ENCODE measurements at regions of chr17 and their contacts with region 1.

Region 1: DNA sequence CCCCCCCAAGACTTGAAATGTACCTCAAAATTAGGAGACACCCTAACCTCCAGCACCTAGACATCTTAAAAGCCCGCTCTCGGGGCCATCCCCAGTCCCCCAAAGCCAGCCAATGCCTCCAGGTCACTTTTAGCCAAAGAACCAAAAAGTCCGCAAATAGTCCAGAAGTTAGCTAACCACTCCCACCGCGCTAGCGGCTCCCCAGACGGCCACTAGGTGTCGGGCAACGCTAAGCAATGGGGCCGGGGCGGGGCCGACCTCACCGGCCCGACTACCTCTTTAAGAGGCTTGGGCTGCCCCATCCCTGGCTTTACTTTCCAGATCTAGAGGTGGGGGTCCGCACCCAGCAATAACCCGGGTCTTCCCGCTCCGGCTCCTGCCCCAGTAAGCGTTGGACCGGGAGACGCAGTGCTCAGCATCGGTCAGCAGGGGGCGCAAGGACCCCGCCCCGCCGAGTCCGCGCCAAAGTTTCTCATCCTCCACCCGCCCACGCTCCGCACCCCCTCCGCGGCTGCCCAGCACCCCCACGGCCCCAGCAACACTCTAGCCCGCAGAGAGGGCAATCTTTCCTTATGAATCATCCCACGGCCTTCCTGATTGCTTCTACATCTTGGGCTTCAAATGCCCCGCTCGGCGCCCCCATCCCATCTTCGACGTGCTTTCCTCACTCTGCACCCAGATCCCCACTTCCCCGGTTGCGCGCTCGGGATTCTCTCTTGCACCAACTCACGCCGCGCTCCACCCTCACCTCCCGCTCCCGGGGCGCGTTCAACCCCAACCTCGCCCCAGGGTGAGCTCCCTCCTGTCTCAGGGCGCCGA is 765 bp downstream of the COL1A1 start:
- DNase-seq: peak; percentile 93
- ATAC-seq: peak; percentile 74
- H3K4me3 ChIP-seq: peak overlapping the region; percentile 69
- H3K27ac ChIP-seq: peak overlapping the region; percentile 92
- H3K4me1 ChIP-seq: peaks cover 18% of the 10 kb centered on the region
- H3K27me3 ChIP-seq: 0 out of 2 replicates have a peak, but pooled peaks cover 6% of the 10 kb centered on the region
- CTCF ChIP-seq: peak; percentile 100

Region 2: GRCh38 chr17:50094753-50095619 is 105.7 kb before region 1 on chr17 and contains the start of gene PDK2:
- CTCF ChIA-PET with region 1: interaction called, 5 read pairs
- POLR2A ChIA-PET with region 1: no interaction called
- intact Hi-C with region 1: loop called (anchors 1 kb)
- DNase-seq: peak; percentile 99
- ATAC-seq: peak; percentile 82
- H3K4me3 ChIP-seq: peak within 1 kb of the TSS; percentile 88
- H3K27ac ChIP-seq: peak within 1 kb of the TSS; percentile 20
- H3K4me1 ChIP-seq: peaks cover 14% of the 10 kb centered on the region
- H3K27me3 ChIP-seq: no peaks in the 10 kb centered on the region
- CTCF ChIP-seq: no peak
- total RNA-seq, gene PDK2: 31.9 and 37.6 TPM in 2 replicates

Region 3: DNA sequence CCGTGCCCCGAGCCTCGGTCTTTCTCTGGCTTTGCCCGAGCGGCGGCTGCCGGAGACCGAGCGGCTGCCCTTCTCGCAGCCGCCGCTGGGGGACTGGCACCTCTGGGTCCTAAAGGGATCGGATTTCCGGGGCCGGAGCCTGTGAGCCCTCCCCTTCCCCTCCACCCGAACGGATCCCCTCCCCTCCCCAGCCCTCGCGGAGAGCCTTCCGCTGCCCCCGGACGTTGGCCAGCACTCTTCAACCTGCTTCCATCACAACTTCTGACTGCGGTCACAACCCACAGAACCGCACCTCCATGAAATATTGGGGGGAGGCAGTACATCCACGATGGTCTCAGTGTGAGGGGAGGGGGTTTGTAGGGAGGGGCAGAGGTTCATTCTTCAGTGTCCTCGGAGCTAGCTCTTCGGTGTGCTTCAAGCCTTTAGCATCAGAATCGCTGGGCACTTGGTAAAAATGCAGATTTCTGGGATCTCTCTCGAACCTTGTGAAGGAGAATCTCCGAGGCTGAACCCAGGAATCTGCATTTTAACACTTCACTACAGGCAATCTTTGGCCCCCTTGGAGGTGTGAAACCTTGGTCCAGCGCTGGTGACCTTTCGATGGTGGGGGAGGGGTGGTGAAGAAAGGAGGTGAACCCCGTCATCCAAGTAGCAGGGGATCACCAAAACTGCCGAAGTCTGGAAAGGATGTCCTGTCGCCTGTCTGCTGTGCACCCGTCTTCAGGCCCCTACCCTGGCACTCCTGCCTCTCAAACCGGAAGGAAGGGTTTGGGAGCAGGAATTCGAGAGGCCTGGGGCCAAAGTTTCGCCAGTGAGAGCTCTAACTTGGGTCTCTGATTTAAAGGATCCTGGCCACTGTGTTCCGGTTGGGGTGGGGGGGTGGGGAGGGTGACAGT is 49.4 kb before region 1 on chr17:
- CTCF ChIA-PET with region 1: interaction called, 13 read pairs
- POLR2A ChIA-PET with region 1: interaction called, 4 read pairs
- intact Hi-C with region 1: no loop called
- DNase-seq: peak; percentile 97
- ATAC-seq: peak; percentile 57
- H3K4me3 ChIP-seq: peak overlapping the region; percentile 90
- H3K27ac ChIP-seq: peak overlapping the region; percentile 82
- H3K4me1 ChIP-seq: peaks cover 51% of the 10 kb centered on the region
- H3K27me3 ChIP-seq: no peaks in the 10 kb centered on the region
- CTCF ChIP-seq: peak; percentile 28; the same call in 1 of the 2 replicates

Region 4: GRCh38 chr17:50218771-50219315 is 18.2 kb after region 1 on chr17:
- CTCF ChIA-PET with region 1: interaction called, 6 read pairs
- POLR2A ChIA-PET with region 1: no interaction called
- intact Hi-C with region 1: loop called (anchors 1 kb)
- DNase-seq: peak; percentile 82
- ATAC-seq: peak; percentile 28
- H3K4me3 ChIP-seq: peak overlapping the region; percentile 13; the same call in 1 of the 2 replicates
- H3K27ac ChIP-seq: peak overlapping the region; percentile 89
- H3K4me1 ChIP-seq: peaks cover 44% of the 10 kb centered on the region
- H3K27me3 ChIP-seq: no peaks in the 10 kb centered on the region
- CTCF ChIP-seq: no peak

Region 5: GRCh38 chr17:50289991-50290702 is 89.5 kb after region 1 on chr17:
- CTCF ChIA-PET with region 1: interaction called, 14 read pairs
- POLR2A ChIA-PET with region 1: interaction called, 3 read pairs
- intact Hi-C with region 1: no loop called
- DNase-seq: peak; percentile 98
- ATAC-seq: peak; percentile 94
- H3K4me3 ChIP-seq: peak overlapping the region; percentile 50
- H3K27ac ChIP-seq: peak overlapping the region; percentile 92
- H3K4me1 ChIP-seq: peaks cover 35% of the 10 kb centered on the region
- H3K27me3 ChIP-seq: no peaks in the 10 kb centered on the region
- CTCF ChIP-seq: no peak

Region 6: GRCh38 chr17:50443368-50443971 is 242.8 kb after region 1 on chr17:
- CTCF ChIA-PET with region 1: interaction called, 18 read pairs
- POLR2A ChIA-PET with region 1: no interaction called
- intact Hi-C with region 1: no loop called
- DNase-seq: peak; percentile 86
- ATAC-seq: peak; percentile 52
- H3K4me3 ChIP-seq: peak overlapping the region; percentile 2; the same call in 1 of the 2 replicates
- H3K27ac ChIP-seq: no peak overlapping the region
- H3K4me1 ChIP-seq: peaks cover 29% of the 10 kb centered on the region
- H3K27me3 ChIP-seq: no peaks in the 10 kb centered on the region
- CTCF ChIP-seq: no peak

Measured in PC-3 (cell line).